HEK293 (cell line): ENCODE measurements at regions of chr11 and their contacts with region 1.

Region 1: DNA sequence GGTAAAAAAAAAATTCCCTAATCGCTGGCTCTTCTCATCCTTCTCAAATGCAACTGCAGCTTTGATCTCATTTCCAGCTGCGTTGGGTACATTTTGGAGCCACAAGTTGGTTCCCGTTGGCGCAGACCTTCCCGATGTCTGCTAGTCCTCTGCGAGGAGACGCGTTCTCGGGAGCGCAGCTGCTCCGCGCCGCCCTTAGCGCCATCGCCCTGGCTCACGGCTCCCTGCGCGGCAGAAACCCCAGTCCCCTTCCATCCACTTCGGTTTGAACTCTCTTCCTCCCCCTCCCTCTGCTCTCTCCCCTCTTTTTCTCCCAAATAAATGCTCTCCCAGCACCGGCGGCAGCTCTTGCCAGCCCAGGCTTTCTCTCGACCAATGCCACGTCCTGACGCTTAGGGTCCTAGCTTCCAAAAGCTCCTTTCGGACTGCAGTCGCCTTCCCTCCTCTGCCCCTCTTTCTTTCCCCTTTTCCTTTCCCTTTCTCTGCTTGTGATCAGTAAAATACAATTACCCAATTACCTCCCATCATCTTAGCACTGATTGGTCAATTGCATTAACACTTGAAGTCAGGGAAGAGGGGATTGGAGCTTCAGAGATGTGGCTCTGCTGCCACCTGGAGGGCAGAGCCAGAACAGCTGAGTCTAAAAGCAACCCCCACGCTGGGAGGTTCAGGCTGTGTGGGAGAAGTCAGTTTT is 1165.7 kb downstream of the LRRC4C start:
- H3K4me3 ChIP-seq: peak overlapping the region; percentile 50
- H3K27ac ChIP-seq: no peak overlapping the region
- H3K4me1 ChIP-seq: no peaks in the 10 kb centered on the region
- CTCF ChIP-seq: no peak

Region 2: DNA sequence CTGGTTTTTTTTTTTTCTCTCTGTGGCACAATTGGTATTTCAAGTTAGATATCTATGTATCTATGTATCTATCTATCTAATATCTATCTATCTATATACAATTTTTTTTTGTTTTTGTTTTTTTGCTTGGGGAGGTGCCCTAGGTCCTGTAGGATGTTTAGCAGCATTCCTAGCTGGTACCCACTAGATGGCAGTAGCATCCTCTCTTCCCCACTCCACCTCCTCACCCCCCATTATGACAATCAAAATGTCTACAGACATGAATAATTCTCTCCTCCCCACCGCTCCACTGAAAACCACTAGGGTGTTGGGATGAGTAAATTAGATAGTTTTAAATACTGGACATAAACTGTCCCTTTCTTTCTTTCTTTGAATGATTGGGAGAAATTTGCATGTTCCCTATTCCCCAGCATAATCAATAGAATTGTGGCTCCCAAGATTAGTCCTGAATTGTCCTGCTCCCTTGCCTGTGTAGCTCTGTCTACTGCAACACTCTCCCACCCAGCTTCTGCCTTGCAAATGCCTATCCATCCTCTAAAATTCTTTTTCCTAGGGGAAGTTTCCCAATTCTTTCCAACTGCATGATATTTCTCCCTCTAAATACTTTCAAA is 13.2 kb after region 1 on chr11:
- CTCF ChIA-PET with region 1: interaction called, 14 read pairs
- POLR2A ChIA-PET with region 1: no interaction called
- H3K4me3 ChIP-seq: no peak overlapping the region
- H3K27ac ChIP-seq: no peak overlapping the region
- H3K4me1 ChIP-seq: no peaks in the 10 kb centered on the region
- CTCF ChIP-seq: no peak